ENCODE measurements at regions of chr9 and their contacts with region 1.

Region 1: GRCh38 chr9:107340920-107341632 is 58.0 kb downstream of the RAD23B start:
- DNase-seq: peak; percentile 77
- ATAC-seq: peak; percentile 83
- H3K4me3 Mint-ChIP-seq: peak overlapping the region; percentile 22
- H3K27ac Mint-ChIP-seq: peak overlapping the region; percentile 36
- H3K4me1 Mint-ChIP-seq: peaks cover 9% of the 10 kb centered on the region
- H3K27me3 Mint-ChIP-seq: no peaks in the 10 kb centered on the region
- CTCF ChIP-seq: peak; percentile 38

Region 2: GRCh38 chr9:107000218-107000617 is 340.9 kb before region 1 on chr9:
- CTCF ChIA-PET with region 1: no interaction called
- POLR2A ChIA-PET with region 1: no interaction called
- intact Hi-C with region 1: no loop called
- DNase-seq: no peak
- ATAC-seq: no peak
- H3K4me3 Mint-ChIP-seq: no peak overlapping the region
- H3K27ac Mint-ChIP-seq: no peak overlapping the region
- H3K4me1 Mint-ChIP-seq: peaks cover under 1% of the 10 kb centered on the region
- H3K27me3 Mint-ChIP-seq: no peaks in the 10 kb centered on the region
- CTCF ChIP-seq: no peak

Region 3: DNA sequence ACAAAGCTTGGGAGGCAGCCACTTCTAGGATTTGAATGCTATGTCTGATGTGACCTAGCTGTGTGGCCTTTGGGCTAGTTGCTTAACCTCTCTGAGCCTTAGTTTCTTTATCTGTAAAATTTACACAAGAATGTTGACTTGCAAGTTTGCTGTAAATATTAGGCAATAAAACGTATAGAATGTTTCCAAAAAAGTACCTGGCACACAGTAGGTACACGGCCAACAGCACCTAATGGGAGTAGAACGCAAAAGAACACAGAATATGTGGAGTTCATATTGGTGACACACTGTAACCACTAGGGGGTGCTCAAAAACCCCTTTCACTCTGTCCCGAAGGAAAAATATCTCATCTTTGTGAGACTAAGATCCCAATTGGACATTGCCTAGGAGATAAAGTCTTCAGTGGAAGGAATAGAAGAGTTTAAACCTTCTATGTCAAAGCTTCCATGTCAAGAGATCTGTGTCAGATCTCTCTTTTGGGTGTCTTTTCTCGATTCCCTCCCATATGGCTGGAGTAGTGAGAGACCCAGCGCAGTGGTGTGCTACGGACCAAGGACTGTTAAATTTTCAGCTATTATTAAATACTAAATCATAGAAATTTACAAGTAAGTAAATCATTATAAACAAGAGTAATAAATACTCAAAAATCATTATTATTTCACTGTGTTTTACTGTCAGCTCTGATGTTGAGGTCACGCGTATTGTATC is 203.4 kb before region 1 on chr9:
- CTCF ChIA-PET with region 1: interaction called, 12 read pairs
- POLR2A ChIA-PET with region 1: no interaction called
- intact Hi-C with region 1: loop called (anchors 1 kb)
- DNase-seq: no peak
- ATAC-seq: no peak
- H3K4me3 Mint-ChIP-seq: no peak overlapping the region
- H3K27ac Mint-ChIP-seq: no peak overlapping the region
- H3K4me1 Mint-ChIP-seq: no peaks in the 10 kb centered on the region
- H3K27me3 Mint-ChIP-seq: peaks cover 17% of the 10 kb centered on the region
- CTCF ChIP-seq: no peak

Region 4: DNA sequence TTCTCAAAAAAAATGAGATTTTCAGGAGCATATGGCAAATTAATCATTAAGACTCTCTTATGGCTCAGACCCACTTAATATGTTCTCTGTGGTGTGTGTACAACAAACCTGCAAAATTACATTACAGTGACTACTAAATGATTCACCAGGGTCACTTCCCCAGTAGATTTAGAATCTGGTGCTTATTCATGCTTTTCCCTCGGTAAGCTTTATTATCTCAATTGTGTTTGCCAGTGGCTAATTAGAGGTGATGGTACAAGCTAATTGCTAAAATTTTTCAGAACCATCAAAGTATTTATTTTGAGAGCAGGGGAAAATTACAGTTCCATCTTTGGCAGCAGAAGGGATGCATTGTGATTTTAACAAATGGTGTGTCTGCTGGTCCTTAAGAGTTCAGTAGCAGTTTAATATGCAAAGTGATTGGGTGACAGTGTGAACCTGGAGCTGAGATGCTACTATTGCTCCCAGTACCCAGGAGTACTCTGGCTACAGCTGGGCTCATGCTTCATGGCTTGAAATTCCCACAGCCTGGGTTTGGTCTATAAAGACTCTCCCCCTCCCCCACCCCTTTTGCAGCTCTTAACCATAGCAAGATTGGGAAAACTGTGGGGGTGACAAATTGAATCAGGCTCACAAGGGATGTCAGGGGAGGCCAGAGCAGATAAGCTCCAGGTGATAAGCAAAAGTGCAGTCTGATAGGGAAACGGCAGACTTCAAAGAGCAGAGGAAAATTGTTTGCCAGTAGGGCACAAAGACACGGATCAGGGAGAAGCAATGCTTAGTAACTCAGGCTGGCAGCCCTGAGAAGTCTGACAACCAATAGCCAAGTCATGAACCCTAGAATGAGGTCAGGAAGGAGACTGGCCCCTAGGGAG is 150.8 kb before region 1 on chr9:
- CTCF ChIA-PET with region 1: interaction called, 3 read pairs
- POLR2A ChIA-PET with region 1: no interaction called
- intact Hi-C with region 1: loop called (anchors 5 kb)
- DNase-seq: no peak
- ATAC-seq: no peak
- H3K4me3 Mint-ChIP-seq: no peak overlapping the region
- H3K27ac Mint-ChIP-seq: no peak overlapping the region
- H3K4me1 Mint-ChIP-seq: no peaks in the 10 kb centered on the region
- H3K27me3 Mint-ChIP-seq: peaks cover 7% of the 10 kb centered on the region
- CTCF ChIP-seq: no peak

Region 5: GRCh38 chr9:107260437-107261086 is 80.5 kb before region 1 on chr9:
- CTCF ChIA-PET with region 1: interaction called, 12 read pairs
- POLR2A ChIA-PET with region 1: interaction called, 4 read pairs
- intact Hi-C with region 1: no loop called
- DNase-seq: peak; percentile 17
- ATAC-seq: peak; percentile 98
- H3K4me3 Mint-ChIP-seq: peak overlapping the region; percentile 53
- H3K27ac Mint-ChIP-seq: peak overlapping the region; percentile 67
- H3K4me1 Mint-ChIP-seq: peaks cover 26% of the 10 kb centered on the region
- H3K27me3 Mint-ChIP-seq: peaks cover 3% of the 10 kb centered on the region
- CTCF ChIP-seq: no peak

Region 6: GRCh38 chr9:107328510-107328909 is 12.6 kb before region 1 on chr9:
- CTCF ChIA-PET with region 1: interaction called, 10 read pairs
- POLR2A ChIA-PET with region 1: no interaction called
- intact Hi-C with region 1: no loop called
- DNase-seq: no peak
- ATAC-seq: no peak
- H3K4me3 Mint-ChIP-seq: no peak overlapping the region
- H3K27ac Mint-ChIP-seq: no peak overlapping the region
- H3K4me1 Mint-ChIP-seq: peaks cover 1% of the 10 kb centered on the region
- H3K27me3 Mint-ChIP-seq: no peaks in the 10 kb centered on the region
- CTCF ChIP-seq: no peak